B cell (primary cell): ENCODE measurements at regions of chr10 and their contacts with region 1.

Region 1: DNA sequence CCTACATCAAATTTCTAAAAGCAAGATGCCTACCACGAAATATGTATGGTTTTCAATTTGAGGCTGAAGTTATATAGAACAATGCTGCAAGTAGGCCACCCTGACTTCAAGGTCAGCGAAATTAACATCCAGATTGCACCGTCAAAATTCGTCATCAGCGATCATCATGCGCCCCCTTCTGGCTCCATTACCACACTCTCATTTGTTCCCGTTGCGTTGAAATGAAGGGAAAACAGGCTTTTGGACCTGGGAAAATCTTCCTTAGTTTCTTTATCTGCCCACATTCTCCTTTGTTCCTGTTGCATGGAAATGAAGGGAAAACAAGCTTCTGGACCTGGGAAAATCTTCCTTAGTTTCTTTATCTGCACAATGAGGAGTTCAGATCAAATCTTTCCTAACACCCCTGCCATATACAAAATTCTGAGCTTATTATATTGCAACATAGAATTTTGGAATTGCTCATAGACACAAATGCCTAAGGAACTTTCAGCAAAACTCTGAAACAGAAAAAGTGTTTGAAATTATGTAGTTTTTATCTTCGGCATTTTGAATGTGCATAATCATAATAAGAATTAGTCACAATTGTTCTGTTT is 98.2 kb upstream of the PRKCQ start:
- DNase-seq: peak; percentile 53
- ATAC-seq: no peak
- H3K4me3 ChIP-seq: no peak overlapping the region
- H3K4me3 Mint-ChIP-seq: no peak overlapping the region
- H3K27ac ChIP-seq: no peak overlapping the region
- H3K27ac Mint-ChIP-seq: no peak overlapping the region
- H3K4me1 ChIP-seq: no peaks in the 10 kb centered on the region
- H3K4me1 Mint-ChIP-seq: peaks cover 2% of the 10 kb centered on the region
- H3K27me3 ChIP-seq: peaks cover 0 to 13% (median 0%) of the 10 kb centered on the region in 4 experiments
- H3K27me3 Mint-ChIP-seq: peaks cover 32% of the 10 kb centered on the region
- CTCF ChIP-seq: peak; percentile 73

Region 2: GRCh38 chr10:6108603-6109443 is 569.5 kb before region 1 on chr10:
- CTCF ChIA-PET with region 1: no interaction called
- POLR2A ChIA-PET with region 1: no interaction called
- intact Hi-C with region 1: loop called (anchors 5 kb)
- DNase-seq: peak; percentile 72
- ATAC-seq: peak; percentile 80
- H3K4me3 ChIP-seq: no peak overlapping the region
- H3K4me3 Mint-ChIP-seq: no peak overlapping the region
- H3K27ac ChIP-seq: no peak overlapping the region
- H3K27ac Mint-ChIP-seq: no peak overlapping the region
- H3K4me1 ChIP-seq: peaks cover 7 to 9% of the 10 kb centered on the region in 2 donors
- H3K4me1 Mint-ChIP-seq: peaks cover 12% of the 10 kb centered on the region
- H3K27me3 ChIP-seq: no peaks in the 10 kb centered on the region
- H3K27me3 Mint-ChIP-seq: no peaks in the 10 kb centered on the region
- CTCF ChIP-seq: peak; percentile 87

Region 3: DNA sequence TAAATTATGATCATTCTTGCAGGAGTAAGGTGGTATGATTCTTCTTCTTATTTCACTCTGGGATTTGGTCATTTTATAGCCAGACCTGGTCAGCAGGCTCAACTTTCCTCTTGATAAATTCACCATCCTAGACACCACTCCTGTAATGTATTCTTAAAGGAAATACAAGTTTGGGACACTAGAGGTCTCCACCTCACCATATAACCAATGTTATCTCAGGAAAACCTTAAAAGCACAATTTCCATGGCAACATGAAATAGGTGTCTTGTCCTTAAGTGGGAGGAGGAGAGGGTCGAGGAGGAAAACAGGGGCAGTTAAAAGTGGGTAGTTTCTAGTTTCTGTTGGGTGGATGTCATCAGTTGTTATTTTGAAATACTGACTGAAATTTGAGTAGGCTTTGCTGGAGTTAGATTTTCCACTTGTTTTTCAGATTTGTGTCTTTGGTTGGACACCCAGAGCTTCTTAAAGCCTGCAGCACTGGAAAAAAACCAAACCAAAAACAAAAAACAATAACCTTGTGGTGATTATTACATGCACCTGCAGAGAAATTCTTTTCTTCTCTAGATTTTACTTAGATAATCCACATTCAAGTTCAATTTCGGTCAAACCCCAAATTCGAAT is 261.3 kb before region 1 on chr10:
- CTCF ChIA-PET with region 1: interaction called, 26 read pairs
- POLR2A ChIA-PET with region 1: no interaction called
- intact Hi-C with region 1: no loop called
- DNase-seq: peak; percentile 64
- ATAC-seq: peak; percentile 45
- H3K4me3 ChIP-seq: no peak overlapping the region
- H3K4me3 Mint-ChIP-seq: no peak overlapping the region
- H3K27ac ChIP-seq: no peak overlapping the region
- H3K27ac Mint-ChIP-seq: no peak overlapping the region
- H3K4me1 ChIP-seq: no peaks in the 10 kb centered on the region
- H3K4me1 Mint-ChIP-seq: no peaks in the 10 kb centered on the region
- H3K27me3 ChIP-seq: no peaks in the 10 kb centered on the region
- H3K27me3 Mint-ChIP-seq: peaks cover 13% of the 10 kb centered on the region
- CTCF ChIP-seq: peak; percentile 81

Region 4: DNA sequence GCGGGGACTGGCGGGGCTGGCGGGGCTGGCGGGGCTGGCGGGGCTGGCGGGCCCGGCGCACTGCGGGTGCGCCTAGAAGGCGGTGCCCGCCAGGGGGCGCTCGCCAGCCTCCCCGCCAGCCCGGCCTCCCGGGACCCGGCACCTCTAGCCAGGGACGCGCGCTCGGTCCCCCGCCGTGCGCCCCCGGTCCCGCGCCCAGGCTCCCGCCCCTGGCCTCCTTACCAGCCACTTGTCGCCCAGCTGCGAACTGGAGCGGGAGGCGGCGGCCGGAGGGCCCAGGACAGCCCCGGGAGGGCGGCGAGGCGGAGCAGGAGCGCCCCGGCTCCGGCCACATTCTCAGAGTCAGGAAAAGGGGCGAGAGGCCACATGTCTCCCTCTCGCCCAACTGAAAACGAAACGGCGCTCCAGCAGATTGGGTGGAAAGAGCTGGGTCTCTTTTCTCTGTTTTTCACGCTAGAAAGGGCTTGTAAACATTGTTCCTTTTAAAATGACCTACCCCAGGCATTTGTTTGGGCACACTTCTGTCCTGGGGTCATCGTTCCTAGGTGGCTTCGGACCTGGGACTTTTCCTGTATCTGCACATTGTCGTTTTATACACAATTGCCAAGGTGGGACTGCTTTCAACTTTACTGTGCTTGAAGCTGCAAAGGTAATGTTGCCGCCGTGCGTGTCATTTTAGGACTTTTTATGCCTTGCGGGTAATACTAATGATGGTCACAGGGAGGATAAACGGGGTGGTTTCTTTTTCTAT is 97.9 kb before region 1 on chr10:
- CTCF ChIA-PET with region 1: interaction called, 4 read pairs
- POLR2A ChIA-PET with region 1: no interaction called
- intact Hi-C with region 1: loop called (anchors 1 kb)
- DNase-seq: peak; percentile 76
- ATAC-seq: peak; percentile 89
- H3K4me3 ChIP-seq: peak overlapping the region; percentile 48 to 85 (median 64)
- H3K4me3 Mint-ChIP-seq: peak overlapping the region; percentile 75
- H3K27ac ChIP-seq: peak overlapping the region in 1 of 2 donors; percentile 46
- H3K27ac Mint-ChIP-seq: no peak overlapping the region
- H3K4me1 ChIP-seq: peaks cover 12 to 19% of the 10 kb centered on the region in 2 donors
- H3K4me1 Mint-ChIP-seq: peaks cover 14% of the 10 kb centered on the region
- H3K27me3 ChIP-seq: peaks cover 0 to 31% (median 23%) of the 10 kb centered on the region in 4 experiments
- H3K27me3 Mint-ChIP-seq: peaks cover 45% of the 10 kb centered on the region
- CTCF ChIP-seq: peak; percentile 66

Region 5: GRCh38 chr10:6667679-6668270 is 10.5 kb before region 1 on chr10:
- CTCF ChIA-PET with region 1: interaction called, 15 read pairs
- POLR2A ChIA-PET with region 1: no interaction called
- intact Hi-C with region 1: no loop called
- DNase-seq: no peak
- ATAC-seq: no peak
- H3K4me3 ChIP-seq: no peak overlapping the region
- H3K4me3 Mint-ChIP-seq: no peak overlapping the region
- H3K27ac ChIP-seq: no peak overlapping the region
- H3K27ac Mint-ChIP-seq: no peak overlapping the region
- H3K4me1 ChIP-seq: no peaks in the 10 kb centered on the region
- H3K4me1 Mint-ChIP-seq: no peaks in the 10 kb centered on the region
- H3K27me3 ChIP-seq: peaks cover 0 to 6% (median 0%) of the 10 kb centered on the region in 4 experiments
- H3K27me3 Mint-ChIP-seq: peaks cover 6% of the 10 kb centered on the region
- CTCF ChIP-seq: no peak